Activated CD4-positive, alpha-beta T cell treated with anti-CD3 and anti-CD28 coated beads for 36 hours (primary cell): ENCODE measurements at regions of chr1 and their contacts with region 1.

Region 1: GRCh38 chr1:206469933-206470691 is at the start of gene IKBKE:
- DNase-seq: peak; percentile 74
- ATAC-seq: peak; percentile 53
- H3K4me3 Mint-ChIP-seq: peak within 1 kb of the TSS; percentile 83
- H3K27ac Mint-ChIP-seq: peak within 1 kb of the TSS; percentile 91
- H3K4me1 Mint-ChIP-seq: peaks cover 92% of the 10 kb centered on the region
- H3K27me3 Mint-ChIP-seq: no peaks in the 10 kb centered on the region
- total RNA-seq, gene IKBKE: 15.3 to 17.2 TPM

Region 2: DNA sequence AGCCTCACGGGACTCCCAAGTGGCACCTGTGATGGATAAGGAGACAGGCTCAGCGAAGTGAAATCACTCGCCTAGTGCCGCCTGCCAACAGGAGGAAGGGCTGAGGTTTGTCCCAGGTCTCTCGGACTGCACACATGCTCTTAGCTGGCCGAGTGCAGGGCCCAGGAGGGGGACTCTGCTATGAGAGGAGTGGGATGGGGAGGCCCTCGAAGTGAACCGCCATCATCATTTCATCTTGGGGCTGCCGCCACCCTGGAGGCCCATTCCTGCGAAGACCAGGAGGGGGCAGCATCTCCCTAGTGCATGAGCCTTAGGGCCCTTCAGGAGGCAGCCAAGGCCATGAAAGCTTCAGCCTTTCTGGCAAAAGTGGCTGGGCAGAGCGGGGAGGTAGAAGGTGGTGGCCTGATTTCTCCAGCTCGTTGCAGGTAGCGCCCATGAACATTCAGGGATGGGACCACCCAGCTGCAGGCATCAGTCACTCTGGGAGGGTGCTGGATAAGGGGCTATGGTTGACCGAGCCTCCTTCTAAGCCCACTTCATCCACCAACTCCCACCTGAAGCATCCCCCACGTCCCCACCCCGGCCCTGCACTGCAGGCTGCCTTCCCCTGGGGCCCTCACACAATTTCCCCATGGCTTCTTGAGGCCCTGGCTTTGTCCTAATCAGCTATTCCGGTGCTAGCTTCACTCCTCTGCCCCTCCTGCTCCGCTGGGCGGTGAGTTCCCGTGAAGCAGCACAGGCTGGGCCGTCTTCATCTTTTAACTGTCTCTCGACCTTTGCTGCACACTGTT is 20.1 kb after region 1 on chr1:
- CTCF ChIA-PET with region 1: interaction called, 18 read pairs
- POLR2A ChIA-PET with region 1: no interaction called
- intact Hi-C with region 1: no loop called
- DNase-seq: peak; percentile 89
- ATAC-seq: peak; percentile 95
- H3K4me3 Mint-ChIP-seq: no peak overlapping the region
- H3K27ac Mint-ChIP-seq: no peak overlapping the region
- H3K4me1 Mint-ChIP-seq: no peaks in the 10 kb centered on the region
- H3K27me3 Mint-ChIP-seq: no peaks in the 10 kb centered on the region

Region 3: DNA sequence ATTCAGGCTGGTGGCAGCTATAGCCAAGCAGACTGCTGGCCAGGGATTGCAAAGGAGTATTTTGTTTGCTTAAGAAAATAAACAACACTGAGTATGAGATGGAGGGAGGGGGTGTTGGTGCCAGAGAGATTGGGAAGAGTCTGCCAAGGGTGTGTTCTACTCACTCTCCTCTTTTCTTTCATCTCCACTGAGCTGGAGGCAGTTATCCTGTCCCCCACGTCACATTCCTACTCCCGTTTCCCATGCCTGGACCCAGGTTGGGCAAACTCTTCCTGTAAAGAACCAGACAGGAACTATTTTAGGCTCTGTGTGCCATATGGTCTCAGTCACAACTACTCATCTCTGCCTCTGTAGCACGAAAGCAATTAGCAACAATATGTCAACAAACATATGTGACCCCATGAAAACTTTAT is 425.7 kb after region 1 on chr1:
- CTCF ChIA-PET with region 1: no interaction called
- POLR2A ChIA-PET with region 1: no interaction called
- intact Hi-C with region 1: loop called in 1 of 2 experiments (anchors 1 kb)
- DNase-seq: no peak
- ATAC-seq: no peak
- H3K4me3 Mint-ChIP-seq: no peak overlapping the region
- H3K27ac Mint-ChIP-seq: peak overlapping the region; percentile 49
- H3K4me1 Mint-ChIP-seq: peaks cover 88% of the 10 kb centered on the region
- H3K27me3 Mint-ChIP-seq: no peaks in the 10 kb centered on the region